GM12878 (cell line): ENCODE measurements at regions of chr7 and their contacts with region 1.

Region 1: DNA sequence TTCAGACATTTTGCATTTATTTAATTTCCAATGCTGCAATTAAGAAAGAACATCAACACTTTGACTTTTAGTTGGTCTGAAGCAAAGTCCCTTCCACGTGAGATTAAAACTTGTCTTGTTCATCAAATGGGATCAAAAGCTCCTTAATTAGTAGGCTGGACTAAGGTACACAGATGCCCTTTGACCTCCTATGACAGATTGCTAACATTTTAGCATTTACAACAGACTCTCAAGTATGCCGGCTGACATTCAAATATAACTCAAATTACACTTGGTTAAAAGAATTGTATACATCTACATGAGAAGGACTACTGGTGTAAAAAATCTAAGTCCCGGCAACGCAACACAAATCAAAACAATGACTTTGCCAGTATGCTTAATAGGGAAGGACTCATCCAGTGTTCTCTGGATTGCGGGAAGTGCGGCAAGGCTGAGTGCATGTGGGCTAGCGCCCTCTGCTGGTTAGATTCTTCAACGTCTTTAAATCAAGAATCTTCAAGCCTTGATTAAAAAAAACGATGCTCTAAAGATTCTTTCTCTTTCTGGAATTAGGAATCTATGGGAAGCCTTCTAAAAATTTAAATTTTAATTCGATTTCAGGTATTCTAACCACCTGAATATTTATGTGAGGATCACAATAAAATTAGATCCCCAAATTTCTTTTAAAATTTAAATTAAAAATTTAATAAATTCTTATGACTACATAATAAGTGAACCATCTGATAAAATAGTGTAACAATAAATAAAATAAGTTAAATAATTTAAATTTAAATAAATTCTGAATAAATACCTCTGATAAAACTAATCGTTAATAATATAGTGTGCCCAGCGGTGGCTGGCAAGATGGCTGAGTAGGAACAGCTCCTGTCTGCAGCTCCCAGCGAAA is 444.7 kb downstream of the DGKB start:
- DNase-seq: no peak
- ATAC-seq: peak; percentile 74
- H3K4me3 ChIP-seq: no peak overlapping the region
- H3K27ac ChIP-seq: no peak overlapping the region
- H3K4me1 ChIP-seq: no peaks in the 10 kb centered on the region
- H3K27me3 ChIP-seq: no peaks in the 10 kb centered on the region
- CTCF ChIP-seq: peak; percentile 70 to 77 (median 74)
- EP300 ChIP-seq: no peak
- POLR2A ChIP-seq: no peak
- RAD21 ChIP-seq: peak; percentile 64

Region 2: GRCh38 chr7:13532028-13532753 is 925.6 kb before region 1 on chr7:
- CTCF ChIA-PET with region 1: no interaction called
- POLR2A ChIA-PET with region 1: no interaction called
- RAD21 ChIA-PET with region 1: no interaction called
- SMC1A ChIA-PET with region 1: no interaction called
- in situ Hi-C with region 1: no loop called
- intact Hi-C with region 1: loop called (anchors 5 kb)
- DNase-seq: no peak
- ATAC-seq: no peak
- H3K4me3 ChIP-seq: no peak overlapping the region
- H3K27ac ChIP-seq: no peak overlapping the region
- H3K4me1 ChIP-seq: no peaks in the 10 kb centered on the region
- H3K27me3 ChIP-seq: no peaks in the 10 kb centered on the region
- CTCF ChIP-seq: no peak
- EP300 ChIP-seq: no peak
- POLR2A ChIP-seq: no peak
- RAD21 ChIP-seq: no peak

Region 3: GRCh38 chr7:13898967-13899670 is 558.7 kb before region 1 on chr7:
- CTCF ChIA-PET with region 1: no interaction called
- POLR2A ChIA-PET with region 1: no interaction called
- RAD21 ChIA-PET with region 1: no interaction called
- SMC1A ChIA-PET with region 1: no interaction called
- in situ Hi-C with region 1: no loop called
- intact Hi-C with region 1: loop called (anchors 10 kb)
- DNase-seq: no peak
- ATAC-seq: no peak
- H3K4me3 ChIP-seq: no peak overlapping the region
- H3K27ac ChIP-seq: no peak overlapping the region
- H3K4me1 ChIP-seq: no peaks in the 10 kb centered on the region
- H3K27me3 ChIP-seq: no peaks in the 10 kb centered on the region
- CTCF ChIP-seq: no peak
- EP300 ChIP-seq: no peak
- POLR2A ChIP-seq: no peak
- RAD21 ChIP-seq: no peak

Region 4: GRCh38 chr7:14446829-14447228 is 11.0 kb before region 1 on chr7:
- CTCF ChIA-PET with region 1: interaction called, 7 read pairs
- POLR2A ChIA-PET with region 1: no interaction called
- RAD21 ChIA-PET with region 1: no interaction called
- SMC1A ChIA-PET with region 1: interaction called, 10 read pairs
- in situ Hi-C with region 1: no loop called
- intact Hi-C with region 1: no loop called
- DNase-seq: no peak
- ATAC-seq: peak; percentile 82
- H3K4me3 ChIP-seq: no peak overlapping the region
- H3K27ac ChIP-seq: no peak overlapping the region
- H3K4me1 ChIP-seq: no peaks in the 10 kb centered on the region
- H3K27me3 ChIP-seq: no peaks in the 10 kb centered on the region
- CTCF ChIP-seq: no peak
- EP300 ChIP-seq: no peak
- POLR2A ChIP-seq: no peak
- RAD21 ChIP-seq: no peak